Activated B cell treated with CpG ODN at 0.5 μM for 24 hours (primary cell): ENCODE measurements at regions of chr22 and their contacts with region 1.

Region 1: DNA sequence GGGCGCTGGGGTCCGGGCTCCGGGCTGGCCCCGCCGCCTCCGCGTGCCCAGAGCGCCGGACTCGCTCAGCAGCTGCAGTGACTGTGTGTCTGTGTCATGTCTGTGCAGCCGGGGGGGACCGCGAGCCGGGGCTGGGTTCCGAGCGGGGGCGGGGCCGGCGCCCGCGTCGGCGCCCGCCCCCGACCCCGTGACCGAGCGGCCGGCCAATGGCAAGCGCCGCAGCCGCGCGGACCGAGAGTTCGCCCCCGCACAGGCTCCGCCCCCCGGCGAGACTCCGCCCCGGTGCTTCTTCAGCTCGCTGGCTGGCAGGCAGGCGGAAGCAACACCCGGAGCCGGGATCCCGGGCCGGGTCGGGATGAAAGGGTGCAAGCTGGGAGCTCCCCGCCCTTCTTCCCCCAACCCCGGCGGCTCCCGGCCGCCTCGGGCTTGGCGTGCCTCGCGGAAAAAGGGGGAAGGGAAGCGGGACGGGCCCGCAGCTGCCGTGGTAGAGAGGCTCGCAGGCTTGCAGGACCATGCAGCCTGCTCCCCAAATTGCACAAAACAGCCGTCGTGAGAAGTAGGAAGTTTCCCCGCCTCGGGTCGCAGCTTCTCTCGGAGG is 750 bp upstream of the LARGE1 start:
- DNase-seq: peak; percentile 98
- ATAC-seq: peak; percentile 86
- H3K4me3 Mint-ChIP-seq: peak overlapping the region; percentile 91
- H3K27ac Mint-ChIP-seq: peak overlapping the region; percentile 50
- H3K4me1 Mint-ChIP-seq: peaks cover 47% of the 10 kb centered on the region
- H3K27me3 Mint-ChIP-seq: peaks cover 10% of the 10 kb centered on the region
- CTCF ChIP-seq: no peak

Region 2: GRCh38 chr22:33401291-33401690 is 519.7 kb before region 1 on chr22:
- CTCF ChIA-PET with region 1: no interaction called
- POLR2A ChIA-PET with region 1: interaction called, 17 read pairs
- intact Hi-C with region 1: no loop called
- DNase-seq: no peak
- ATAC-seq: no peak
- H3K4me3 Mint-ChIP-seq: no peak overlapping the region
- H3K27ac Mint-ChIP-seq: no peak overlapping the region
- H3K4me1 Mint-ChIP-seq: peaks cover 9% of the 10 kb centered on the region
- H3K27me3 Mint-ChIP-seq: no peaks in the 10 kb centered on the region
- CTCF ChIP-seq: no peak

Region 3: DNA sequence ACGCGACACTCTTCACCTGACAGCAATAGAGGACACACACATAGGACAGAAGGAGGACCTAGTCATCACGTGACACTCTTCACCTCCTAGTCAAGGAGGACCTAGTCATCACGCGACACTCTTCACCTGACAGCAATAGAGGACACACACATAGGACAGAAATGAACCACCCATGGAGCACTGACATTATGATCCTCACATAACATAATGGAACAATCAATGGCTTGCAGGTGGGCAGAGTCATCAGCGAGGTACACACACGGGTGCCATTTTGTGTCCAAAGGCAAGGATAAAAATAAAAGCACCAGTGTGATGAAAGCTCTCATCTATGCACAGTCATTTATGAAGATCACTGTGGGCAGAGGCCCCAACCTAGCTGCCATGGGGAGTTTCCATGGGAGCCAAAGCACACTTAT is 355.4 kb before region 1 on chr22:
- CTCF ChIA-PET with region 1: interaction called, 3 read pairs
- POLR2A ChIA-PET with region 1: interaction called, 16 read pairs
- intact Hi-C with region 1: loop called (anchors 2 kb)
- DNase-seq: no peak
- ATAC-seq: no peak
- H3K4me3 Mint-ChIP-seq: no peak overlapping the region
- H3K27ac Mint-ChIP-seq: peak overlapping the region; percentile 8
- H3K4me1 Mint-ChIP-seq: peaks cover 81% of the 10 kb centered on the region
- H3K27me3 Mint-ChIP-seq: no peaks in the 10 kb centered on the region
- CTCF ChIP-seq: no peak

Region 4: DNA sequence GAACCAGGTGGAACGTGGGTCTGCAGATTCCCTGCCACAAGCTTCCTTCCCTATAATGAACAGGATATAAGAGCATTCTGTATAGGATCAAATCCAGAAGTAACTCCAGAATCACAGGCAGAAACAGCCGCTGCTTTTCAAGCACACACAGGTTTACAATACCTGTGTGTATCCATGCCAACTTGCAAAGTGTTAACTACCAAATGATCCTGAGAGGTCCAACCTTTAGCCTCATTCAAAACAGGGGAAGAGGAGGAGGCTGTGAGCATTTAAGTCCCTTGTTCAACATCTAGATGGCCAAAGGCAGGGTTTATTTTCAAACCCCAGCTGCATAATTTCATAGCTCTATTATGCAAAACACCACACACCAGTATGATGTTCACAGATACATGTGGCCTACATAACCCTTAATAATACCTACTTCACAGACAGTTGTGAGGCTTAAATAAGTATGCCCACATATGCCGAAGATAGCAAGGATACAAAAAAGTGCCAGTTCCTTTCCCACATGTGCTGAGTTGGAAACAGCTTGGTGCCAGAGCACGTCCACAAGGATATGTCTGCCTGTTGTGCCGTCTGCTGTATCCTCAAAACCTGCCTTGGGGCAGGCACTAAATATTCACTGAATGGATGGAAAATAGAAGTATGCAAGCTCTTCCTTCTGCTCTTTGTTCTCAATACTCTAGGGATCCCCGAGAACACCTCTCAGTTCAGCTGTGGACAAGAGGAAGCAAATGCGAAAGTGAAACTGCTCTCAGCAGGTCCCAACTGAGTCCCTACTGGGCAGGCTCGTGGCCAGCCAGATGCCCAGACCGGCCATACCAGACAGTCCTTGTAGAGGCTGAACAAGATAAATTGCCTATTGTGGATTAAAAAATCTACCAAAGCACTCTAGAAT is 67.6 kb before region 1 on chr22:
- CTCF ChIA-PET with region 1: interaction called, 3 read pairs
- POLR2A ChIA-PET with region 1: interaction called, 9 read pairs
- intact Hi-C with region 1: loop called (anchors 1 kb)
- DNase-seq: peak; percentile 20
- ATAC-seq: peak; percentile 97
- H3K4me3 Mint-ChIP-seq: peak overlapping the region; percentile 84
- H3K27ac Mint-ChIP-seq: peak overlapping the region; percentile 88
- H3K4me1 Mint-ChIP-seq: peaks cover 32% of the 10 kb centered on the region
- H3K27me3 Mint-ChIP-seq: no peaks in the 10 kb centered on the region
- CTCF ChIP-seq: no peak

Region 5: GRCh38 chr22:34105461-34106062 is 184.5 kb after region 1 on chr22:
- CTCF ChIA-PET with region 1: interaction called, 39 read pairs
- POLR2A ChIA-PET with region 1: no interaction called
- intact Hi-C with region 1: no loop called
- DNase-seq: peak; percentile 15
- ATAC-seq: peak; percentile 45
- H3K4me3 Mint-ChIP-seq: no peak overlapping the region
- H3K27ac Mint-ChIP-seq: no peak overlapping the region
- H3K4me1 Mint-ChIP-seq: no peaks in the 10 kb centered on the region
- H3K27me3 Mint-ChIP-seq: peaks cover 12% of the 10 kb centered on the region
- CTCF ChIP-seq: no peak

Region 6: DNA sequence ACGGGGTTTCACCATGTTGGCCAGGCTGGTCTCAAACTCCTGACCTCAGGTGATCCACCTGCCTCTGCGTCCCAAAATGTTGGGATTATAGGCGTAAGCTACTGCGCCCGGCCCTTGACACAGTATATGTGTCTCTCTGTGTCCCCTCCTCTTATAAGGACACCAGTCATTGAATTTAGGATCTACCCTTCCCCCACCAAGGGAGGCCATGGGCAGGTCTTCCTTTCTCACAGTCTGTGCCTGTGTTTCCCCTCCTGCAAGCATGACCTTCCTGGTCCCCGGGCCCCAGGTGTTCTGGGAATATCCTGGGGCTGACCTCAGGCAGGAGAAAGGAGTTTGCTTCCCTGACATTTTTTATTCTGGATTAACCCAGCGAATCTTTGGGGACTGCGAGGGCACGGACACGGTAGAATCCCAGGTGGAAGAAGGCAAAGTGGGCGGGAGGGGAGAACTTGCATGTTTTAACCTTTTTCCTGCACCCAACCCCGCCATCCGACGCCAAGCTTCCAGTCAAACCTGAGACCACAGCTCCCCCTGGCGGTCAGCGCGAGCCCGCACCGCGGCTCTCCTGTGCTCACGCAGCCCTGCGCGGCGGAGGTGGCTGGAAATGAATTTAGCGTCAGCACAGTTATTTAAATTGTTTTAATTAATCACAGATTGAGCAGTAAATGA is 1102.8 kb after region 1 on chr22:
- CTCF ChIA-PET with region 1: no interaction called
- POLR2A ChIA-PET with region 1: no interaction called
- intact Hi-C with region 1: loop called (anchors 2 kb)
- DNase-seq: peak; percentile 58
- ATAC-seq: no peak
- H3K4me3 Mint-ChIP-seq: no peak overlapping the region
- H3K27ac Mint-ChIP-seq: no peak overlapping the region
- H3K4me1 Mint-ChIP-seq: peaks cover 4% of the 10 kb centered on the region
- H3K27me3 Mint-ChIP-seq: peaks cover 26% of the 10 kb centered on the region
- CTCF ChIP-seq: peak; percentile 63